PC-3 (cell line): ENCODE measurements at regions of chr3 and their contacts with region 1.

Region 1: DNA sequence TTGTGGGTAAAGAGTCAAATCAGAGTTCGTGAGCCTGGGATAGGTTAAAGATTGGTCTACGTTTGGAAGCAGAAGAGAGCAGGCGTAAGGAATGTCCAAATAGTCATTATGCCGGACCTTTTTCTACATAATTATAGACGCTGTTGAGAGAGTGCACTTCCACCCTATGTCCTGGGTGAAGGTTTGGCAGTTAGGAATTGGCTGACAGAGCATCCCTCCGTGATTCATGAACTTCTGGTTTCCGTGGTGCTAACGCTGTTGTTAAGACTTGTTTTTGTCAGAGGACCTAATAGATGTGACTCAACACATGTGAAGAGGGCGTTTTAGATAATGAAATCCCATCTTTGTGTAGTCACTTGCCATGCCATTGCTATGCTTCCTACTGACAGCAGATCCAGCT is 1.1 kb downstream of the EAF1 start:
- DNase-seq: peak; percentile 61
- ATAC-seq: peak; percentile 56
- H3K4me3 ChIP-seq: peak overlapping the region; percentile 100
- H3K27ac ChIP-seq: 0 out of 2 replicates have a peak overlapping the region, but pooled peaks have one; percentile 4
- H3K4me1 ChIP-seq: peaks cover 20% of the 10 kb centered on the region
- H3K27me3 ChIP-seq: no peaks in the 10 kb centered on the region
- CTCF ChIP-seq: no peak

Region 2: GRCh38 chr3:15440891-15441290 is 12.4 kb after region 1 on chr3:
- CTCF ChIA-PET with region 1: no interaction called
- POLR2A ChIA-PET with region 1: no interaction called
- intact Hi-C with region 1: no loop called
- DNase-seq: no peak
- ATAC-seq: no peak
- H3K4me3 ChIP-seq: no peak overlapping the region
- H3K27ac ChIP-seq: no peak overlapping the region
- H3K4me1 ChIP-seq: no peaks in the 10 kb centered on the region
- H3K27me3 ChIP-seq: no peaks in the 10 kb centered on the region
- CTCF ChIP-seq: no peak

Region 3: GRCh38 chr3:15557511-15557946 is 129.0 kb after region 1 on chr3:
- CTCF ChIA-PET with region 1: no interaction called
- POLR2A ChIA-PET with region 1: no interaction called
- intact Hi-C with region 1: loop called (anchors 1 kb)
- DNase-seq: peak; percentile 94
- ATAC-seq: peak; percentile 100
- H3K4me3 ChIP-seq: no peak overlapping the region
- H3K27ac ChIP-seq: no peak overlapping the region
- H3K4me1 ChIP-seq: 0 out of 2 replicates have a peak, but pooled peaks cover 3% of the 10 kb centered on the region
- H3K27me3 ChIP-seq: no peaks in the 10 kb centered on the region
- CTCF ChIP-seq: peak; percentile 80

Region 4: GRCh38 chr3:15630646-15631350 is 202.3 kb after region 1 on chr3:
- CTCF ChIA-PET with region 1: no interaction called
- POLR2A ChIA-PET with region 1: no interaction called
- intact Hi-C with region 1: no loop called
- DNase-seq: peak; percentile 86
- ATAC-seq: peak; percentile 44
- H3K4me3 ChIP-seq: peak overlapping the region; percentile 55
- H3K27ac ChIP-seq: peak overlapping the region; percentile 89
- H3K4me1 ChIP-seq: peaks cover 58% of the 10 kb centered on the region
- H3K27me3 ChIP-seq: no peaks in the 10 kb centered on the region
- CTCF ChIP-seq: no peak